Dorsolateral prefrontal cortex (tissue), 120 donors: ENCODE measurements at regions of chr9 and their contacts with region 1.

Region 1: GRCh38 chr9:116795821-116796220 is 108.7 kb downstream of the TRIM32 start:
- DNase-seq: peak in 1 of 10 donors; percentile 67
- H3K4me3 ChIP-seq: no peak overlapping the region
- H3K27ac ChIP-seq: no peak overlapping the region
- H3K27me3 ChIP-seq: no peaks in the 10 kb centered on the region
- CTCF ChIP-seq: no peak

Region 2: DNA sequence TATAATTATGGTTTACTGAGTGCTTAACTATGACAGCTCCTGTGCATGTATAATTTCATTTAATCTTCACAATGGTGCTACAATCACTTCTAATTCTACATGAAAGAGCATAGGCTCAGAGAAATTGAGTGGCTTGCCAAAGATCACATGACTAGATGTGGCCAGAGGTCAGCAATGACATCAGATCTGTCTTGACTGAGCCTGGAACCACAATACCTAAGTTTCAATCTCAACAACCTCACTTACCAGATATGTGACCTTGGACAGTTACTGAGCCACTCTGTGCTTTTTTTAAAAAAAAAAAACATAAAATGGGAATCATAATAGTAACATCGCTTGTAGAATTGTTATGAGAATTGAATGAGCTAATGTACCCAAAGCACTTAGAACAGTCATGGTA is 21.9 kb after region 1 on chr9:
- intact Hi-C with region 1: loop called in 1 of 2 experiments (anchors 1 kb)
- DNase-seq: no peak
- H3K4me3 ChIP-seq: peak overlapping the region in 1 of 59 donors; percentile 3
- H3K27ac ChIP-seq: no peak overlapping the region
- H3K27me3 ChIP-seq: no peaks in the 10 kb centered on the region
- CTCF ChIP-seq: no peak

Region 3: DNA sequence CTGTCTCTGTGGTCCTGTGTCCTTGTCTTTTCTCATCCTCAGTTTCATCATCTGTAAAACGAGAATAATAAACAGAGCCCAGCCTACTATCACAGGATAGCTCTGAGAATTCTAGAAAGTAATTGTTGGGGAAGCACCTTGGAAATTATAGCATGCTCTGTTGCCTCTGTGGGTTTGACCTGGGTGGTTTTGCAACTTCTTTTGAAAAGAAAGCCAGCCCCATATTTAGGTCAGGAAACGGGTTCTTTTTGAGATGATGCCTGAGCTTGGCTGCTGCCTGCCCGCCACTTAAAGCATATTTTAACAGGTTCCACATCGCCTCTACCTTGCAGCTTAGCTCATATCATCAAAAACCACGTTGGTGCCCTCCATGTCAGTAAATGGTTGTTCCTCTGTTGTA is 1019.5 kb after region 1 on chr9:
- intact Hi-C with region 1: no loop called
- DNase-seq: no peak
- H3K4me3 ChIP-seq: no peak overlapping the region
- H3K27ac ChIP-seq: no peak overlapping the region
- H3K27me3 ChIP-seq: no peaks in the 10 kb centered on the region
- CTCF ChIP-seq: no peak